Naive thymus-derived CD4-positive, alpha-beta T cell (primary cell): ENCODE measurements at regions of chr11 and their contacts with region 1.

Region 1: DNA sequence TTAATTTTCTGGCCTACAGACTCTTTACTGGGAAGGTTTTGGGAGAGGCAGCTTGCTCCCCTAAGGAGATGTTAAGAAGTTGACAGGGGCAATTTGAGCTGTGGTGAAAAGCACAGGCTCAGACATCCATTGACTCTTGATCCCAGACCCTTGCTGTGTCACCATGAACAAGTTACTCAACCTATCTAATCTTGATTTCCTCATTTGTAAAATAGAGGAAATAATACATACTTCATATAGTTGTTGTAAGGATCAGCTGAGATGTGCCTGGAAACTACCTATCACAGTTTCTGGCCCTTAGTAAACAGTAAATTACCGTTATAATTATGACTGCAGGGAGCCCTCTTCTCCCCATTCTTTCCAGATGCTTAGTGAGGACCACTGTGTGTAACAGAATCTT is 16.6 kb upstream of the SCGB1D4 start:
- DNase-seq: no peak
- ATAC-seq: peak; percentile 43
- H3K4me3 ChIP-seq: no peak overlapping the region
- H3K4me3 Mint-ChIP-seq: no peak overlapping the region
- H3K27ac ChIP-seq: no peak overlapping the region
- H3K27ac Mint-ChIP-seq: no peak overlapping the region
- H3K4me1 ChIP-seq: no peaks in the 10 kb centered on the region
- H3K4me1 Mint-ChIP-seq: peaks cover 0 to 16% (median 13%) of the 10 kb centered on the region in 7 donors
- H3K27me3 ChIP-seq: no peaks in the 10 kb centered on the region
- H3K27me3 Mint-ChIP-seq: peaks cover 17 to 55% (median 21%) of the 10 kb centered on the region in 5 donors

Region 2: GRCh38 chr11:61871158-61871597 is 444.3 kb before region 1 on chr11:
- CTCF ChIA-PET with region 1: no interaction called
- POLR2A ChIA-PET with region 1: no interaction called
- intact Hi-C with region 1: loop called in 1 of 2 experiments (anchors 1 kb)
- DNase-seq: peak; percentile 23 to 77 (median 50)
- ATAC-seq: peak; percentile 94
- H3K4me3 ChIP-seq: no peak overlapping the region
- H3K4me3 Mint-ChIP-seq: peak overlapping the region; percentile 34 to 87 (median 70)
- H3K27ac ChIP-seq: no peak overlapping the region
- H3K27ac Mint-ChIP-seq: peak overlapping the region in 3 of 9 donors; percentile 43 to 52 (median 46)
- H3K4me1 ChIP-seq: no peaks in the 10 kb centered on the region
- H3K4me1 Mint-ChIP-seq: peaks cover 0 to 8% (median 5%) of the 10 kb centered on the region in 7 donors
- H3K27me3 ChIP-seq: no peaks in the 10 kb centered on the region
- H3K27me3 Mint-ChIP-seq: peaks cover 0 to 8% (median 0%) of the 10 kb centered on the region in 5 donors

Region 3: DNA sequence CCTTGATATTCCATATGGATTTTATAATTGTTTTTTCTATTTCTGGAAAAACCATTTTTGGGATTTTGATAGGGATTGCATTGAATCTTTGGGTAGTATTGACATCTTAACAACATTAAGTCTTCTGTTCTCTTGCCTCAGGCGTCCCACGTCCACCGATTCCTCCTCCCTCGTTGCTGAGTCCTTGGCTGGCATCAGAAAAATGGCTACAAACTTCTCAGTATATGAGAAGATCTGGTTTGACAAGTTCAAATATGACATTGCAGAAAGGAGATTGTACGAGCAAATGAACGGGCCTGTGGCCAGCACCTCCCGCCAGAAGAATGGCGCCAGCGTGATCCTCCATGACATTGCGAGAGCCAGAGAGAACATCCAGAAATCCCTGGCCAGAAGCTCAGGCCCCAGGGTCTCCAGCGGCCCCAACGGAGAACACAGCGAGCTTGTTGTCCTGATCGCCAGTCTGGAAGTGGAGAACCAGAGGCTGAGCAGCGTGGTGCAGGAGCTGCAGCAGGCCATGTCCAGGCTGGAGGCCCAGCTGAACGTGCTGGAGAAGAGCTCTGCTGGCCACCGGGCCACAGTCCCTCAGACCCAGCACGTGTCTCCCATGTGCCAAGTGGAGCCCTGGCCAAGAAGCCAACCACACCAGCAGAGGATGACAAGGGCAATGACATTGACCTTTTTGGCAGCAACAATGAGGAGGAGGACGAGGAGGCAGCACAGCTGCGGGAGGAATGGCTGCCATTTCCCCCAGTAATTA is 146.2 kb before region 1 on chr11:
- CTCF ChIA-PET with region 1: interaction called, 3 read pairs
- POLR2A ChIA-PET with region 1: no interaction called
- intact Hi-C with region 1: loop called (anchors 1 kb)
- DNase-seq: no peak
- ATAC-seq: no peak
- H3K4me3 ChIP-seq: no peak overlapping the region
- H3K4me3 Mint-ChIP-seq: no peak overlapping the region
- H3K27ac ChIP-seq: no peak overlapping the region
- H3K27ac Mint-ChIP-seq: no peak overlapping the region
- H3K4me1 ChIP-seq: peaks cover 0 to 4% of the 10 kb centered on the region in 2 donors
- H3K4me1 Mint-ChIP-seq: peaks cover 0 to 5% (median 5%) of the 10 kb centered on the region in 7 donors
- H3K27me3 ChIP-seq: no peaks in the 10 kb centered on the region
- H3K27me3 Mint-ChIP-seq: peaks cover 30 to 40% (median 34%) of the 10 kb centered on the region in 5 donors

Region 4: DNA sequence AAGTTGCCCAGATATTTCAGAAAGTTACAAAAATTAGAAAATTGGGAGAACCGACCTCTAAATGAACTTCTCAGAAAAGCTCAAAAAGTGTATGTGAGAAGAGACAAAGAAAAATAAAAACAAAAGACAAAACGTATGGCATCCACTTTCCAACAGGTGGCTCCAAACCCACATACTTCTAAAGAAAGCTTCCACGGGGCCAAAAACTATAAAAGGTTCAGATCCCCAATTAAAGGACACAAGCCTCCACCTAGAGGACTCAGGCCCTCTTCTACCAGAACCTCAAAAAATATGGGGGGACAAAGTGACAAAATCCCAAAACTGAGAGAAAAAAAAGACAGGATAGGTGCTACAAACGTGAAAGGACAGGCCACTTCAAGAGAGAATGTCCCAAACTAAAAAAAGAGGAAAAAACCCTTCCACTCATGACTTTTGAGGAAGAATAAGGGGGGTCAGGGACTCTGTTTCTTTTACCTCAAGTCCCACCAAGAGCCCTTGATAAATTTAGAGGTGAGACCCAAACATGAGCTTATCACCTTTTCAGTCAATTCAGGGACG is 98.2 kb before region 1 on chr11:
- CTCF ChIA-PET with region 1: no interaction called
- POLR2A ChIA-PET with region 1: no interaction called
- intact Hi-C with region 1: loop called (anchors 1 to 5 kb)
- DNase-seq: no peak
- ATAC-seq: no peak
- H3K4me3 ChIP-seq: no peak overlapping the region
- H3K4me3 Mint-ChIP-seq: no peak overlapping the region
- H3K27ac ChIP-seq: no peak overlapping the region
- H3K27ac Mint-ChIP-seq: no peak overlapping the region
- H3K4me1 ChIP-seq: no peaks in the 10 kb centered on the region
- H3K4me1 Mint-ChIP-seq: no peaks in the 10 kb centered on the region
- H3K27me3 ChIP-seq: no peaks in the 10 kb centered on the region
- H3K27me3 Mint-ChIP-seq: peaks cover 14 to 42% (median 24%) of the 10 kb centered on the region in 5 donors